HepG2 (cell line): ENCODE measurements at regions of chr16 and their contacts with region 1.

Region 1: GRCh38 chr16:8885674-8886592 is 3.8 kb downstream of the LITAFD start:
- DNase-seq: peak; percentile 46
- ATAC-seq: peak; percentile 45
- H3K4me3 ChIP-seq: peak overlapping the region in 2 of 3 experiments; percentile 24 to 73; a peak in 3 of 6 replicates
- H3K27ac ChIP-seq: no peak overlapping the region
- H3K4me1 ChIP-seq: peaks cover 58% of the 10 kb centered on the region
- H3K27me3 ChIP-seq: no peaks in the 10 kb centered on the region
- CTCF ChIP-seq: peak; percentile 58
- EP300 ChIP-seq: no peak
- POLR2A ChIP-seq: peak in 1 of 2 experiments; percentile 33; a peak in 1 of 4 replicates
- RAD21 ChIP-seq: no peak; the same call in 1 of the 2 replicates

Region 2: DNA sequence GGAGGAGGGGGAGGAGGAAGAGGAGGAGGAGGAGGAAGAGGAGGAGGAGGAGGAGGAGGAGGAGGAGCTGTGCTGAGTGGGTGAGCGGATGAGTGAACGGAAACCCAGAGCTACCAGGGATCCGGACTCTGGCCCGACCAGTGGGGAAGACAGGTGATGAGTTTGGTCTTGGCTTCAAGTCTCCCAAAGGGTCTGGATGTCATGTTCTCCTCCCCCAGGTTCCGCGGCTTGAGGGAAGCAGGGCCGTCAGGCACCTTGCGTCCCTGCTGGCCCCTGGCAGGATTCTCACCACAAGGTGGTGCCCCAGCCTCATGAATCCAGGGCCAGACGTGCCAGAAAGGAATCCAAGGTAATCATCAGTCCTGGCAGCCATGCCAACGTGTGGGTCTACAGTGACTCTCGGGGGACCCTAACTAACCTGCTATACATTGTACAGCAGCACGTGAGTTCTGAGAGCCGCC is 225.1 kb before region 1 on chr16:
- CTCF ChIA-PET with region 1: interaction called, 11 read pairs
- POLR2A ChIA-PET with region 1: no interaction called
- in situ Hi-C with region 1: loop called (anchors 25 kb)
- intact Hi-C with region 1: no loop called
- DNase-seq: peak; percentile 71
- ATAC-seq: peak; percentile 88
- H3K4me3 ChIP-seq: peak overlapping the region in 1 of 3 experiments; percentile 17; a peak in 1 of 6 replicates
- H3K27ac ChIP-seq: no peak overlapping the region
- H3K4me1 ChIP-seq: no peaks in the 10 kb centered on the region
- H3K27me3 ChIP-seq: peaks cover 0 to 2% of the 10 kb centered on the region in 2 experiments; a peak in 2 of 5 replicates
- CTCF ChIP-seq: peak; percentile 99
- EP300 ChIP-seq: no peak
- POLR2A ChIP-seq: no peak
- RAD21 ChIP-seq: peak; percentile 99

Region 3: GRCh38 chr16:8740775-8741355 is 145.1 kb before region 1 on chr16:
- CTCF ChIA-PET with region 1: no interaction called
- POLR2A ChIA-PET with region 1: no interaction called
- in situ Hi-C with region 1: no loop called
- intact Hi-C with region 1: loop called (anchors 5 kb)
- DNase-seq: peak; percentile 100
- ATAC-seq: peak; percentile 99
- H3K4me3 ChIP-seq: peak overlapping the region in 1 of 3 experiments; percentile 0; a peak in 1 of 6 replicates
- H3K27ac ChIP-seq: peak overlapping the region; percentile 48
- H3K4me1 ChIP-seq: peaks cover 34% of the 10 kb centered on the region
- H3K27me3 ChIP-seq: no peaks in the 10 kb centered on the region
- CTCF ChIP-seq: no peak
- EP300 ChIP-seq: peak in 1 of 2 experiments; percentile 86; a peak in 2 of 4 replicates
- POLR2A ChIP-seq: peak in 1 of 2 experiments; percentile 35; a peak in 1 of 4 replicates
- RAD21 ChIP-seq: peak; percentile 64

Region 4: DNA sequence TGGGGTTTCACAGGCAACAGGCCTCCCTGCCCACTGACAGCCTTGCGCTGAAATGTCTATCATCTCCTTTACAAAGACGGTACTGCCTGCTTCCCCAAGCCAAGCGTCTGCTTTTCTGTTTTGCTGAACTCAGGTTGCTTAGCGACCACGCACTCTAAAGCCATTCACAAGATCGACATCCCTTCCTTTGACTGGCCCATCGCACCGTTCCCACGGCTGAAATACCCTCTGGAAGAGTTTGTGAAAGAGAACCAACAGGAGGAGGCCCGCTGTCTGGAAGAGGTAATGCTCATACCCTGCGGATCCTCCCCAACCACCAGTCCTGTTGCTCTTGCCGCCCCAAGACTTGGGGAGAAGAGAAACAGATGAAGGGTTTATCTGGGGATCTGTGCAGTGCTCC is 117.2 kb before region 1 on chr16:
- CTCF ChIA-PET with region 1: no interaction called
- POLR2A ChIA-PET with region 1: no interaction called
- in situ Hi-C with region 1: no loop called
- intact Hi-C with region 1: no loop called
- DNase-seq: no peak
- ATAC-seq: no peak
- H3K4me3 ChIP-seq: no peak overlapping the region
- H3K27ac ChIP-seq: no peak overlapping the region
- H3K4me1 ChIP-seq: no peaks in the 10 kb centered on the region
- H3K27me3 ChIP-seq: no peaks in the 10 kb centered on the region
- CTCF ChIP-seq: no peak
- EP300 ChIP-seq: no peak
- POLR2A ChIP-seq: no peak
- RAD21 ChIP-seq: no peak

Region 5: DNA sequence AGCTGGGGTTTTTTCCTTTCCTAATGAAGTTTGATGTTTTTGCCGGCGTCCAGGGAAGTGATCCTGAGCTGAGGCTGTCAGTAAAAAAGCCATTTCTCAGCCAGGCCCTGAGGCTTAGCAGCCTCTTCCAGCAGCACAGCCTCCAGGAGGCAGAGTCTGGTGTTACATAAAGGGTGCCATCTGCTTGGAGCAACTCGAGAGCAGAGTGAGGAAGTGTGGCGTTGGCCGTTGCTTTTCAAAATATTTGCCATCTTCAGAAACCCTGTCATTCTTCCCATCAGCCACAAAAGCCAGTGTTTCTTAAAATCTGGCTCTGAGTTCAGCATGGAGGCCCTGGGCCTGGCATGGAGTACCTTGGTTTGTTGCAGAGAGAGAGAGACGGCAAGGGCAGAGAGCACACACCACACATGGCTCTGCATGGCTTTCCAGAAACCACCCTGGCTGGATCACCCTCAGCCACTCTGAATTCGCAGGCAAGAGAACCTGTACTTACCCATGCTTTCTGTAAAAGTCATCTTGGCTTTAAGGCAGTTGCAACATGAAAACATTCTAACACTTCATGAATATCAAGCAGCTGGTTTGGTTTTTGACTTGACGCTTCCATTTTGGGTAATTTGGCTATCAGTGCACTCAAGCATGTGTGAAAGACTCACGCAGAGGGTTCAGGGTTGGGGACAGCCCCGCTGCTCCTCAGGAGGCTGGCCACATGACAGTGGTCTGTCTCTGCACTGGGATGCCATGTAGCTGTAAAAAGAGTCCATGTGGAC is 67.2 kb before region 1 on chr16:
- CTCF ChIA-PET with region 1: no interaction called
- POLR2A ChIA-PET with region 1: no interaction called
- in situ Hi-C with region 1: no loop called
- intact Hi-C with region 1: loop called (anchors 5 kb)
- DNase-seq: no peak
- ATAC-seq: peak; percentile 8; the same call in 1 of the 3 replicates
- H3K4me3 ChIP-seq: no peak overlapping the region
- H3K27ac ChIP-seq: no peak overlapping the region
- H3K4me1 ChIP-seq: no peaks in the 10 kb centered on the region; the same call in 1 of the 2 replicates
- H3K27me3 ChIP-seq: no peaks in the 10 kb centered on the region
- CTCF ChIP-seq: no peak
- EP300 ChIP-seq: no peak
- POLR2A ChIP-seq: no peak
- RAD21 ChIP-seq: no peak

Region 6: DNA sequence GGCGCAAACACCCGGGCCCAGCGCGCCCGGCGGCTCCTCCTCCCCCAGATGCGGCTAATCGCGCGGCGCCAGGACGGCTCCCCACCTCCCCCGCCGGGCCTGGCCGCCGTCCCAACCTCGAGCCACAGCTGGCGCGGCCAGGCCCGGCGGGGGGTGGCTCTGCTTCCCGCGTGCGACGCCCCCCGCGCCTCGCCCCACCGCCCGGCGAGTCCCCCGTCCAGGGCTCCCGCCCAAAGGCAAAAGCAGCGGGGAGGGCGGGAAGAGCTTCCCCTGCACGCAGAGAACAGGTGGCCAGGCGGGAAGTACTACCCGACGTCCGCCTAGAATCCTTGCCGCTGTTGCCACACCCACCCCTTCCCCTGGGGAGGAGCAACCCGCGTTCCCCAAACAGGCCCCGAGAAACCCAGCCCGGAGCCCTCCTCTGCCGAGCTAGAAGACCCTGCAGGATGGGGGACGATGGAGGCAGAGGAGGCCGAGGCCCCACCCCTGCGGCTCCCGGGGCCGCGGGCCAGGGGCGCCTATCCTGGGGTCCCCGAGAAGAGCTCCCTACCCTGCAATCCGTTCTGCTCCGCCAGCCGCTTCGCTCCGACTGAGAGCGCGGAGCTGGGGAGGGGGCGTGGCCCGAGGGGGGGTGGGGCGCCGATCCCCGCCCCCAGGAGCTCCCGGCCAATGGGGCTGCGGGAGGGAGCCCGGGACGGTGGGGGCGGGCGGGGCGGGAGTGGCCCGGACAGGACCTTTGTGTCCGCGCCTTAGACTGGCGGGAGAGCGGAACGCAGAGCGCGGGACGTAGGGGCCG is 17.3 kb before region 1 on chr16 and contains the start of gene CARHSP1:
- CTCF ChIA-PET with region 1: interaction called, 14 read pairs
- POLR2A ChIA-PET with region 1: interaction called, 235 read pairs
- in situ Hi-C with region 1: no loop called
- intact Hi-C with region 1: no loop called
- DNase-seq: peak; percentile 93
- ATAC-seq: peak; percentile 63
- H3K4me3 ChIP-seq: peak within 1 kb of the TSS; percentile 82 to 97 (median 87)
- H3K27ac ChIP-seq: peak within 1 kb of the TSS; percentile 95
- H3K4me1 ChIP-seq: peaks cover 76% of the 10 kb centered on the region
- H3K27me3 ChIP-seq: no peaks in the 10 kb centered on the region; a peak in 1 of 5 replicates
- CTCF ChIP-seq: no peak
- EP300 ChIP-seq: peak in 1 of 2 experiments; percentile 4; a peak in 1 of 4 replicates
- POLR2A ChIP-seq: peak in 1 of 2 experiments; percentile 88; a peak in 2 of 4 replicates
- RAD21 ChIP-seq: 0 out of 2 replicates have a peak, but pooled peaks have one; percentile 38
- total RNA-seq, gene CARHSP1: 345 and 349 TPM in 2 replicates

Region 7: GRCh38 chr16:8899709-8900317 is 13.9 kb after region 1 on chr16:
- CTCF ChIA-PET with region 1: no interaction called
- POLR2A ChIA-PET with region 1: no interaction called
- in situ Hi-C with region 1: no loop called
- intact Hi-C with region 1: no loop called
- DNase-seq: no peak
- ATAC-seq: peak; percentile 52
- H3K4me3 ChIP-seq: no peak overlapping the region
- H3K27ac ChIP-seq: no peak overlapping the region
- H3K4me1 ChIP-seq: no peaks in the 10 kb centered on the region
- H3K27me3 ChIP-seq: no peaks in the 10 kb centered on the region
- CTCF ChIP-seq: peak; percentile 61
- EP300 ChIP-seq: no peak
- POLR2A ChIP-seq: no peak
- RAD21 ChIP-seq: 0 out of 2 replicates have a peak, but pooled peaks have one; percentile 21